GM10248 (cell line): ENCODE measurements at regions of chr1 and their contacts with region 1.

Region 1: GRCh38 chr1:19260211-19261138 is 8.9 kb downstream of the MRTO4 start:
- DNase-seq: no peak
- CTCF ChIP-seq: no peak

Region 2: DNA sequence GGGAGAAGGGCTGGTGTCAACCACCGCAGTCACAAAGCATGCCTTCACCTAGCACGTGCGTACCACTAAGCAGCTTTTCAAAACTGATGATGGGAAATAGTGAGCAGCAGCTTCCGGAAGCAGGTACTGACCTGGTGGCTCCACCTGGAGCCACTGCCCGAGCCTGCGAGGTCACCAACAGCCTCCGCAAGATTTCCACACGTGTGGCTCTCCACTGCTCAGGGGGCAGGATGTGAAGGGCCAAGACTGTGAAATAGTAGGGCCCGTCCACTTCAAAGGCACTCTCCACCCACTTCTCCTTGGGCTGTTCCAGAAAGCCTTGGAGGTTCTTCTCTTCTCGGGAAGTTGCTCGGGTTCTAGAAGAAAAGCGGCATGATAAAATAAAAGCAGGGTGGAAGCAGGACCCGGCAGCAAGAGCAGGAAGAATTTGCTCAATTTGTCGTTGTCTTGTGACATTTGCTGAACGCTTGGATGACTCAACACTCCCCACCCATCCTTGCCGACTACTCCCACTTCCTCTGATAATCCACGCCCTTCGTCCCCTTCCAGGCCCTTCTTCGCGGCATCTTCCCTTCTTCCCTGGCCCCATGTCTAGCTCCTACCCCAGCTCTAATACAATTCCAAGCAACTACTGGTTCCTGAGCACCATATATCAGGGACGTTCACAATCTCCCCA is 179.1 kb before region 1 on chr1:
- CTCF ChIA-PET with region 1: no interaction called
- POLR2A ChIA-PET with region 1: no interaction called
- DNase-seq: no peak
- CTCF ChIP-seq: no peak

Region 3: GRCh38 chr1:19232526-19232851 is 28.0 kb before region 1 on chr1:
- CTCF ChIA-PET with region 1: no interaction called
- POLR2A ChIA-PET with region 1: interaction called, 10 read pairs
- DNase-seq: no peak
- CTCF ChIP-seq: no peak

Region 4: DNA sequence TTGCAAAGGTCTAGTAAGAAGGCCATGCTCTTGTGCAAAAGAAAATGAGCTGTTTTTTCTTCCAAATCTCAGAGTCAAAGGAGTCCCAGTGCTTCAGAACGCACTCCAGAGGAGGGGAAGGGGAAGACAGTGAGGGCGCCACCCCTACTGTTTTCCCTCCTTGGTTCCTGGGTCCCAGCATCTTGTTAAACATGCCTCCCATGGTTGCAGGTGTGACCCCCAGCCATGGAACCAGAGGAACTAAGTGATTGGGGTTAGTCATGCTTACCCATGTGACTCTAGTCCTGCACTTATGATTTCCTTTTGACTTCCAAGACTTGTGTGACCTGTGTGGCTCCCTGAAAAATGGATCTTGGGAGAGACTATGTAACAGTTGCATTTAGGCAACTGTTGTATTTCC is 34.2 kb after region 1 on chr1:
- CTCF ChIA-PET with region 1: no interaction called
- POLR2A ChIA-PET with region 1: no interaction called
- DNase-seq: no peak
- CTCF ChIP-seq: no peak

Region 5: DNA sequence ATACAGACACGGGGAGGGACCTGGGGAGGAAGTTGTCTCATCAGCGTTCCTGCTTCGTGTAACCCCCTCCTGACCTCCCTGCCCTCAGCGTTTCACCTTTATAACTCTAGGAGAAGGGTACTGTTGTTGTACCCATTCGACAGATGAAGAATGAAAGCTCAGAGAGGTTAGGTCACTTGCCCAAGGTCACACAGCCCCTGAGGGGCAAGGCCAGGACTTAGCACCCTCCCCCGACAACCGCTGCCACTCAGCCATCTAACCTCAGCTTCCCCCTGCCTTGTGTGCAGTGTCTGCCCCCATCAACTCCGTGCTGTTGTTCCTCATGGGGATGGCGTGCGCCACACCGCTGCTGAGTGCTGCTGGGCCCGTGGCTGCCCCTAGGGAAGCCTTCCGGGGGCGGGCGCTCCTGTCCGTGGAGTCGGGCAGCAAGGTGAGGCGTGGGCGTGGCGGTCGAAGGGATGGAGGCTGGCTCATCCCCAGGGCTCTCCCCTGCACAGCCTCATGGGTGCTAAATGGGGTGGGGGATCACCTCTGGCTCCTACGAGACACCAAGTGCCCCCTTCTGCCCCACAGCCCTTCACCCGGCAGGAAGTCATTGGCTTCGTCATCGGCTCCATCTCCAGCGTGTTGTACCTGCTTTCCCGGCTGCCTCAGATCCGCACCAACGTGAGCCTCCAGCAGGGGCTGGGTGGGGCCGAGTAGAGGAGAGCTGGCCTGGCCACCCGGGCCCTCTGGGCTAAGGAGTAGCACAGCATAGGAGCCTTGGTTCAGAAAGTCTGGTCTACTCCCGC is 65.7 kb after region 1 on chr1:
- CTCF ChIA-PET with region 1: no interaction called
- POLR2A ChIA-PET with region 1: no interaction called
- DNase-seq: no peak
- CTCF ChIP-seq: no peak